ENCODE measurements at regions of chr11 and their contacts with region 1.

Region 1: DNA sequence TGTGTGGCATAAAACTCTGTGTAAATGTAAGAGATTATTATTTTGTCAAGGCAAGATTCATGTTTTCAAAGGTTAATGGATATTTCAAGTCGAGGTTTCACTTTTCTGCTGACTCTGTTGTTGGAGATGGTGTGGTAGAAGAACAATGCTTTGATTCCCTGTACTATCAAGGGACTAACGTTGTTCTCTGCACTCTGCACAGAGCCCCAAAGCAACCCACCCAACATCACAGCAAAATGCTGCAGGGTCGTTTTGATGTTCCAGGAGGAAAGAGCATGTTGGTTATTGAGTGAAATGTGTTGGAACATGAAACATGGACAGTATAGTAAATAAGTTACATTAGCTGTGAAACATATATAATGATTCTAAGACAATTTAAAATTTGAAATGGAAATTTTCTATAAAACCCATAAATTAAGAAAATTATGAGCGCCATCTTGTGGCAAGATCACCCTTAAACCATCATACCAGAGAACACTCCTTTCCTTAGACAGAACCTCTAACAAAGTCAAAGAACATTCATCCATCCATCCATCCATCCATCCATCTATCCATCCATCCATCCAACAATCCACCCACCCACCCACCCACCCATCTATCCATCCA is 164.4 kb upstream of the ZBED5 start:
- DNase-seq: peak in 1 of 2 donors; percentile 64
- ATAC-seq: no peak
- H3K4me3 ChIP-seq: no peak overlapping the region
- H3K4me3 Mint-ChIP-seq: no peak overlapping the region
- H3K27ac ChIP-seq: no peak overlapping the region
- H3K27ac Mint-ChIP-seq: no peak overlapping the region
- H3K4me1 ChIP-seq: no peaks in the 10 kb centered on the region
- H3K4me1 Mint-ChIP-seq: no peaks in the 10 kb centered on the region
- H3K27me3 ChIP-seq: no peaks in the 10 kb centered on the region
- H3K27me3 Mint-ChIP-seq: peaks cover 12 to 14% of the 10 kb centered on the region in 2 donors
- CTCF ChIP-seq: no peak

Region 2: GRCh38 chr11:10792398-10792975 is 229.7 kb before region 1 on chr11:
- intact Hi-C with region 1: loop called (anchors 1 kb)
- DNase-seq: peak; percentile 82 to 89
- ATAC-seq: peak; percentile 91 to 97 (median 95)
- H3K4me3 ChIP-seq: no peak overlapping the region
- H3K4me3 Mint-ChIP-seq: no peak overlapping the region
- H3K27ac ChIP-seq: no peak overlapping the region
- H3K27ac Mint-ChIP-seq: no peak overlapping the region
- H3K4me1 ChIP-seq: peaks cover 14% of the 10 kb centered on the region
- H3K4me1 Mint-ChIP-seq: peaks cover 27 to 28% of the 10 kb centered on the region in 2 donors
- H3K27me3 ChIP-seq: peaks cover 2% of the 10 kb centered on the region
- H3K27me3 Mint-ChIP-seq: peaks cover 8 to 14% of the 10 kb centered on the region in 2 donors
- CTCF ChIP-seq: peak; percentile 96

Region 3: DNA sequence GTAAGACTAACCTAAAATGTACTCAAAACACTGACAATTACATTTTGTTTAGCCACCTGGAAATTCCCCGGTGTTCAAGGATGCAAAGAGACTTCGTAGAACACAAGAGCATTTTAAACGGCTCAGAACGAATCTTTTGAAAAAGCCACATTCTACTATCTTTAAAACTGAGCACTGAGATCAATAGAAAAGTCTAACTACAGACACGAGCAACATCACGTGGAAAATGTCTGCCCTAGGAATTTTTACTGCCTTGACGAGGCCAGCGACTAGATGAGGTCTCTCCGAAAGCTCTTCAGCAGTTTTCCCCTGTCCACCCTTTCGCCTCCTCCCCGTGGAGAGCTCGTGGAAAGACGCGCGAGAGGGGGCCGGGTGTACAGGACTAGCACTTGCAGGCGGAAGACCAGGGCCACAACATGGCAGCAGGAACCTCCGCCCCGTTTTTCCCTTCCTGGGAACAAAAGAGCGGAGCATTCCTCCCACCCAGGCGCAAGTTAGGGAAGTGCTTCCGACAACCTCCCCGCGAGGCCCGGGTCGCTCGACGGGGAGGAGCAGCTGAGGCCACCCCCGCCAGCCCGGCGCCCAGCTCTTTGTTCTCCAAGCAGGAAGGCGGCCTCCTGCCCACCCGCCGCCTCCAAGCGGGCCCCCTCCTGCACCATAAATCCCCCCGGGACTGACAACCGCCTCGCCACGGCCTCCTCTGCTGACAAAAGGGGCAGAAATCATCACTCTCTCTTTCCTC is 214.6 kb before region 1 on chr11:
- intact Hi-C with region 1: no loop called
- DNase-seq: peak; percentile 41 to 62
- ATAC-seq: no peak
- H3K4me3 ChIP-seq: peak overlapping the region; percentile 96
- H3K4me3 Mint-ChIP-seq: peak overlapping the region; percentile 97
- H3K27ac ChIP-seq: peak overlapping the region; percentile 95
- H3K27ac Mint-ChIP-seq: peak overlapping the region; percentile 94 to 95
- H3K4me1 ChIP-seq: peaks cover 23% of the 10 kb centered on the region
- H3K4me1 Mint-ChIP-seq: peaks cover 47 to 53% of the 10 kb centered on the region in 2 donors
- H3K27me3 ChIP-seq: no peaks in the 10 kb centered on the region
- H3K27me3 Mint-ChIP-seq: peaks cover 0 to 9% of the 10 kb centered on the region in 2 donors
- CTCF ChIP-seq: no peak

Region 4: GRCh38 chr11:10933455-10934292 is 88.6 kb before region 1 on chr11:
- intact Hi-C with region 1: loop called (anchors 1 kb)
- DNase-seq: peak; percentile 72 to 90
- ATAC-seq: peak; percentile 87 to 92 (median 89)
- H3K4me3 ChIP-seq: peak overlapping the region; percentile 20
- H3K4me3 Mint-ChIP-seq: peak overlapping the region; percentile 78
- H3K27ac ChIP-seq: no peak overlapping the region
- H3K27ac Mint-ChIP-seq: peak overlapping the region in 1 of 2 donors; percentile 54
- H3K4me1 ChIP-seq: peaks cover 22% of the 10 kb centered on the region
- H3K4me1 Mint-ChIP-seq: peaks cover 8 to 22% of the 10 kb centered on the region in 2 donors
- H3K27me3 ChIP-seq: peaks cover 28% of the 10 kb centered on the region
- H3K27me3 Mint-ChIP-seq: peaks cover 43 to 49% of the 10 kb centered on the region in 2 donors
- CTCF ChIP-seq: peak; percentile 93